AG04449 (cell line): ENCODE measurements at regions of chr1 and their contacts with region 1.

Region 1: GRCh38 chr1:26321315-26322041 is 3.7 kb downstream of the CD52 start:
- DNase-seq: peak; percentile 24
- H3K4me3 ChIP-seq: no peak overlapping the region; the same call in 1 of the 2 replicates
- CTCF ChIP-seq: peak; percentile 94

Region 2: DNA sequence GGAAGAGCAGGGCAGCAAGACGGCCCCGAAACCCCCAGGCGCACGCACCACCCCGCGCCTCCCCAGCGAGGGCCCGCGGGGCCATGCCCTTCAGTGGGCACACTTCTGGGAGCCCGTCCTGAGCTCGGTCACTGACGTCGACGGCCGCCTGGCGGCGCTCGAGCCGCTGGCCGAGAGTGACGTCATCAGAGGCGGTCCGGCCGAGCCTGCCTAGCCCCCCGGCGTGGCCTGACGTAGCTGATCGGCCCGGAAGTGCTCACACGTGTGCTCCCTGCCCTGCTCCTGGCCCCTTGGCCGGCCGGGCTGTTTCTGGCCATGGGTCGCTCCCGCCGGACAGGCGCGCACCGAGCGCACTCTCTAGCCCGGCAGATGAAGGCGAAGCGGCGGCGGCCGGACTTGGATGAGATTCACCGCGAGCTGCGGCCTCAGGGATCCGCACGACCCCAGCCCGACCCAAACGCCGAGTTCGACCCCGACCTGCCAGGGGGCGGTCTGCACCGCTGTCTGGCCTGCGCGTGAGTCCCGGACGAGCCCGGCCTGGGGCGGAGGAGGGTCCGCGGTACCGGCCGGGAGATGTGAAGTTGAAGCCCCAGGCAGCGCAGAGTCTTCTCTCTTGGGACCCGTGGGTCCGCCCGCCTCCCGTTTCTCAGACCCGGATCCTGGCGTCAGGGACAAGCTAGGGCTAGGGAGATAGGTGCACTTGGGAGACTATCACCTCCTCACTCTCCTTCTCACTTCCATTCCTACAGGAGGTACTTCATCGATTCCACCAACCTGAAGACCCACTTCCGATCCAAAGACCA is 151.6 kb before region 1 on chr1 and contains the start of gene ZNF593:
- CTCF ChIA-PET with region 1: interaction called, 39 read pairs
- POLR2A ChIA-PET with region 1: interaction called, 4 read pairs
- DNase-seq: peak; percentile 19
- H3K4me3 ChIP-seq: peak within 1 kb of the TSS; percentile 93
- CTCF ChIP-seq: peak; percentile 100

Region 3: DNA sequence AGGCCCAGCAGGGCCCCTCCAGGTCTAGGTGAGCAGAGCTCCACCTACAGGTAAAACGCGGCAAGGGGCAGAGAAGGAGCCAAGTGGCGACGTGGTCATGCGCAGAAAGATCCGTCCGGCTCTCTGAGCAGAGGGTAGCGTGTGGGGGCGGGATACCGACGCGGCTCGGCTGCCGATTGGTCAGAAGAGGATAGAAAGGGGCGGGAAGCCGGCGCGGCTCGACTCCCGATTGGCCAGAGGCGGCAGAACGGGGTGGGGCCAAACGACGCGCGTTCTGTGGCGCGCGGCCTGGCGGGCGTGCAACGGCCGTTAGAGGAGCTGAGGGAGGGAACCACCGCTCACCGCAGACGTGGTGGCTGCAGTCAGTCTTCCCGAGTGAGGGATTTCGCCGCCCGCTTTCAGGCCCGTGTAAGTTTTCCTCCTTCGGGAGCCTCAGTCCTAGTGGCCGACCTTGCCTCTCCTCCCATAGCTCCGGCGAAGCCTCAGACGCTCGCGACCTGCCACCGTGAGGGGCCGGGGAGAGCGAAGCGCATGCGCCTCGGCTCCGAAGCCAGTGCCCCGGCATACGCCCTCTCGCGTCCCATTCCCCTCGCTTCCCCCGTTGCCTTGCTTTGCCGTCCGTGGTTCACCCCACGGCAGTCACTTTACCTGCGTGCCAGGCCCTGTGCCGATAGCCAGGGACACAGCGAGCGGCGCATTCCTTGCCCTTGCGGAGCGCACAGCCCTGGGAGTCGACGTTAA is 87.4 kb before region 1 on chr1 and contains the start of gene CEP85:
- CTCF ChIA-PET with region 1: interaction called, 19 read pairs
- POLR2A ChIA-PET with region 1: no interaction called
- DNase-seq: peak; percentile 75
- H3K4me3 ChIP-seq: peak within 1 kb of the TSS; percentile 100
- CTCF ChIP-seq: peak; percentile 90

Region 4: GRCh38 chr1:26284597-26285360 is 36.7 kb before region 1 on chr1:
- CTCF ChIA-PET with region 1: interaction called, 179 read pairs
- POLR2A ChIA-PET with region 1: no interaction called
- DNase-seq: peak; percentile 69
- H3K4me3 ChIP-seq: no peak overlapping the region; the same call in 1 of the 2 replicates
- CTCF ChIP-seq: peak; percentile 85

Region 5: DNA sequence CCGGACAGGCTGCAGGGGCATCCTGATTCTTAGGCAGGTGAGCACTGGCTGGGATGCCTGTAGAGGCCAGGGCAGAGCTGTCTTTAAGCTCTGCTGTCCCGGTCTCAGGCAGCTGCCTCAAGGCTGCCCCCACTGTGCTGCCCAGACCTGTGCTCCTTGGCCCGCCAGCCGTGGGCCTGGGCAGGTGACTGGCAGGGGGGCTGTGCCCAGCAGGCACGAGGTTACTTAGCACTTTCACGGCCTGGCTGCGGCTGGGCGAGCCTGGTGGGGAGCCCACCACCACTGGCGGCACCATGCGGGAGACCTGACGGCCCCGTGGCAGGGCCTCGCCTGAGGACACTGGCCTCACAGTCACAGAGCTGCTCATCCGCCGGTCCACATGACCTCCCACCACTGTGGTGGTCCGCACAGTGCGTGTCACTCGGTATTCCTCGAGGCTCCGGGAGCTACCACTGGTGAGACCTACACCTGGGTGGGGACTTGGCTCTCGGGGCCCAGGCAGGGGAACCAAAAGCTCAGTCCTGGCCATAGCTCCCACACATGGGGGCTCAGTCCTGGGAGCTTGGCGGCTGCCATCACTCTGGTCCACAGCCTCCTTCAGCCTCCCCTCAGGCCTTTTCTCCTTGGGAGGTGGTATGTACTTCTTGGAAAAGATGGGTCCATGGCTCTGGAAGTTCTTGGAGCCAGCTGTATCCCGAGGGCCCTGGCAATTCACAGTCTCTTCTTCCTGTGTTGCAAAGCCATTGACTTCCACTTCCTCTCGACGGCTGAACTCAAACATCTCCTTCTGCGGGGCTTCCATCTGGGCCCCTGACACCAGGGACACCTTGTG is 24.5 kb after region 1 on chr1:
- CTCF ChIA-PET with region 1: interaction called, 16 read pairs
- POLR2A ChIA-PET with region 1: no interaction called
- DNase-seq: no peak
- H3K4me3 ChIP-seq: no peak overlapping the region
- CTCF ChIP-seq: no peak

Region 6: DNA sequence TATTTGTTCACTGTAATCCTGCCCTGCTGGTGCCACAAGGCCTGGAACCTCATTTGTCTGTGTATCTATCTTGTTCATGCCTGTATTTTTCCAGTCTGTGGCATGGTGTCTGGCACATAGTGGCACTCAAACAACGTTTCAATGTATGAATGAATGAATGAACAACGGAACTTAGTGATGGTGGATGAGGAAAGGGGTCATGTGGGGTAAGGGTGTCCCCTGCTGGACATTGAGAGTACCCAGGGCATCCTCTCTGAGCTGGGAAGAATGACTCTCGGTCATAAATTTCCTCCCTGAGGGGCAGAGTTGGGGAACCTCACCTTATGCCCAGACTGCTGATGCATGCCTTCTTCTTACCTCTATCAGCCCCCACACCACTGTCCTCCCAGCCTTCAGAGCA is 70.0 kb after region 1 on chr1:
- CTCF ChIA-PET with region 1: interaction called, 23 read pairs
- POLR2A ChIA-PET with region 1: no interaction called
- DNase-seq: no peak
- H3K4me3 ChIP-seq: no peak overlapping the region
- CTCF ChIP-seq: peak; percentile 76

Region 7: GRCh38 chr1:26431979-26432695 is 110.7 kb after region 1 on chr1 and contains the start of gene DHDDS:
- CTCF ChIA-PET with region 1: no interaction called
- POLR2A ChIA-PET with region 1: no interaction called
- DNase-seq: peak; percentile 82
- H3K4me3 ChIP-seq: peak within 1 kb of the TSS; percentile 86
- CTCF ChIP-seq: no peak